ENCODE measurements at regions of chr5 and their contacts with region 1.

Region 1: DNA sequence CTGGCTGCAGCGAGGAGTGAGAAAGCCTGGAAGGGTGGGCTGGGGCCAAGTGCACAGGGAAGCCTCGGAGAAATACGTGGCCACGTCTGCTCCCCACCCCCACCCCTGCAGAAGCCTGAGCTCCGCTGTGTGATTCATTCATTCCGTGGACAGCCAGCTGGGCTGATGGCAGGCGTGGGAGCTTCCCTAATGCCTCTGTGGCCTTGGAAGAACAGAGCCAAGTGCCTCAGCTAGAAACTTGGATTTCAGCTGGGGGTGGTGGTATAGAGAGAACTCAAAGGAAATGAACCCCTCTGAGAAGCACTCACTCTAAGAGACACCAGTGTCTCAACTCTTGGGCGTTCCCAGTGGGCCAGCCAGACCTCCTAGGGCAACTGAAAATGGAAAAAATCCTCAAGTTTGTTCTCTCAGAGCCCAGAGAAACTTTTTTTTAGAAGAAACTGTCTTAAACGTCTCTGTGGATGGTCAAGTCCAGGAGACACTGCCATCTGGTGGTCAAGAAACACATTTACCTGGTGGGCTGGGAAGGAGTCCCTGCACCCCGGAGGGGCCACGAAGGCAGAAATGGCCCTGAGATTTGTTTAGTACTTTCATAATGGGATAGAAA is 18.0 kb downstream of the ATOX1 start:
- DNase-seq: peak; percentile 83
- H3K4me3 ChIP-seq: peak overlapping the region; percentile 8
- H3K27me3 ChIP-seq: no peaks in the 10 kb centered on the region
- CTCF ChIP-seq: peak; percentile 75

Region 2: DNA sequence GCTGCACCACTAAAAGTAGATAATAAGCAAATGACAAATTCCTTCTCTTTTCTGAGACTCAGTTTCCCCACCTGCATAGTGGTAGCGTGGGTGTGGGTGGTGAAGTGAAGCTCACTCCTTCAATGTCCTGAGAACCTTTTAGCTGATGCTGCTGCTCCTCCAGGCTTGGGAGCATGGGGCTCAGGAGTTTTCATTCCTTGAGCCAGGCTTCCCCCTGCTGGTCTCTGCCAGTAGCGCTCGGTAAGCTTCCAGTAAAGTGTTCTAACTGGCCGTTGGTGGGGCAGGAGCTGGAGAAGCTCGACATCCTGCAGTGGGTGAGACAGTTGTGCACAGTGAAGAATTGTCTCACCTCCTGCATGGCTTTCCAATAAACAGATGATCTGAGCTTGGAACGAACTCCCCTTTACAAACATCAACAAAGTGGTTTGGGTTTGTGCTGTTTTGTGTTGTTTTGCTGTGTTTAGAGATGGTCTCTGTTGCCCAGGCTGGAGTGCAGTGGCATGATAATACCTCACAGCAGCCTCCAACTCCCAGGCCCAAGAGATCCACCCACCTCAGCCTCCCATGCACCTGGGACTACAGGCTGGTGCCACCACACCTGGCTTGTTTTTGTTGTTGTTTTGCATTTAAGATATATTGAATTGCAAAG is 88.3 kb before region 1 on chr5:
- CTCF ChIA-PET with region 1: interaction called, 234 read pairs
- POLR2A ChIA-PET with region 1: no interaction called
- DNase-seq: no peak
- H3K4me3 ChIP-seq: no peak overlapping the region
- H3K27me3 ChIP-seq: no peaks in the 10 kb centered on the region
- CTCF ChIP-seq: peak; percentile 96

Region 3: DNA sequence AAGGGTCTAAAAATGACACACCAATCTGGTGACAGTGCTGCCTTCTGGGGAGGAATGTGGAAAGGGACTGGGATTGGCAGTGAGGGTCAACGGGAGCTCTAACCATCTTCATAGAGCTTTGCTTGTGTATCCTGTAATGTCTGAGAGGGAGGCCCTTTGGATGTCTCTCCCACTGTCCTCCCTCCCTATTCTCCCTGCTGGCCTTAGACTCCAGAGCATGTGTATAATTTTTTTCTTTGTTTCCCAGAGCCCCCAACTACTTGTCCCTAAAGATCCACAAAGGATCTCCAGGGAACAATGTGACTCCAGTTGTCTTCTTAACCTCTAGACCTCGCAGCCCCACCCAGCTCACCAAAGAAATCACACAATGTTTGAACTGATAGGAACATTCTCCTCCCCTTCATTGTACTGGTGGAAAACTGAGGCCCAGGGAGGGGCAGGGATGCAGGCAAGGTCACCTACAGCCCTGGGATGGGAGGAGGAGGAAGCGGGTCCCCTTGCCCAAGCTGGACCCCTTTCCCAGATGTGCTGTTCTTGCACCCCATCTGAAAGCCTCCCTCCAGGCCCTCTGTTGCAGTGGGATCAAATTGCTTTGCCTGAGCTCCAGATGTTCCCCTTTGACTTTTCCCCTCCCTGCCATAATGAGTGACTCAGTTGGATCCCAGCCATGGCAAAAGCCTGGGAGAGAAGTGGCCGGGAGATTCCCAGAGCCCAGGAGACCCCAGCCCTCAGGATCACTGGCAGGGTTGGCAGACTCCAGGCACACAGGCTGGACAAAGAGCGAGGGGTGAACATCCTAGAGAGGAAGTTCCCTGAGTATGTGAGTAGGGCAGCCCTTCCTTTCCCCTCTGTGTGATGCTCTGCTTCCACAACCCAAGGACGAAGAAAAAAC is 75.5 kb before region 1 on chr5:
- CTCF ChIA-PET with region 1: interaction called, 234 read pairs
- POLR2A ChIA-PET with region 1: interaction called, 14 read pairs
- DNase-seq: no peak
- H3K4me3 ChIP-seq: no peak overlapping the region
- H3K27me3 ChIP-seq: no peaks in the 10 kb centered on the region
- CTCF ChIP-seq: no peak

Region 4: DNA sequence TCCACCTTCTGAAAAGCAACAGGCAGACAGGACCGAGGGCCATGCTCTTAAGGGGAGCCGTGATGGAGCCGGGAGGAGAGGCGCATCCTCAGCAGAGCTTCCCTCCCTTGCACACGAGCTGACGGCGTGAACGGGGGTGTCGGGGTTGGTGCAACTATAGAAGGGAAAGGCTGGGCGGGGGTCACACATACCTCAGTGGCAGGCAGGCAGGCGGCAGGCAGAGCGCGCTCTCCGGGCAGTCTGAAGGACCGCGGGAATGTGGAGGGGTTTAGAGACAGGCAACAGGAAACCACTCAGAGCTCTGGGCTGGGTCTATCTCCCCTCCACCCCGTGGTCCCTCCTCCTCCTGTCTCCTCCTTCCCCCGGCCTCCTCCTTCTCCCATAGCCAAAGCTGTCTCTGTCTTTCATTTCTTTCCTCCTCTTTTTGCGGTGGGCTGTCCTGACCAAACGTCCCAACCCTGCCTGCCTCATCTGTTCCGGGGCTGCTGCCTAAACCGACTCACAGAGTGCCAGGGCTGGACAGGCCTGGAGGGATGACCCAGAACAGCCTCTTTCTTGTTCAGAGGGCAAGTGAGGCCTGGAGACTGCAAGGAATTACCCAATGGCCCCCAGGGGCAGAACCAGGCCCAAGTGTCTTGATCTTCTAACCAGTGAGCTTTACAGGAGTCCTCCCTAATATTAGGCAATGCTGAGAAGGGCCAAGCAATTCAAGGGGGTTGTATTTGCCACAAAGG is 53.6 kb before region 1 on chr5 and contains the start of gene SPARC:
- CTCF ChIA-PET with region 1: interaction called, 59 read pairs
- POLR2A ChIA-PET with region 1: interaction called, 53 read pairs
- DNase-seq: peak; percentile 88
- H3K4me3 ChIP-seq: peak within 1 kb of the TSS; percentile 83
- H3K27me3 ChIP-seq: no peaks in the 10 kb centered on the region
- CTCF ChIP-seq: peak; percentile 14; the same call in 1 of the 2 replicates
- polyA plus RNA-seq, gene SPARC: 14,419 and 17,277 TPM in 2 replicates

Region 5: GRCh38 chr5:151708126-151708525 is 32.3 kb before region 1 on chr5:
- CTCF ChIA-PET with region 1: interaction called, 16 read pairs
- POLR2A ChIA-PET with region 1: interaction called, 3 read pairs
- DNase-seq: no peak
- H3K4me3 ChIP-seq: no peak overlapping the region
- H3K27me3 ChIP-seq: no peaks in the 10 kb centered on the region
- CTCF ChIP-seq: no peak

Region 6: GRCh38 chr5:151751091-151751490 is 10.7 kb after region 1 on chr5:
- CTCF ChIA-PET with region 1: interaction called, 15 read pairs
- POLR2A ChIA-PET with region 1: interaction called, 8 read pairs
- DNase-seq: no peak
- H3K4me3 ChIP-seq: no peak overlapping the region
- H3K27me3 ChIP-seq: no peaks in the 10 kb centered on the region
- CTCF ChIP-seq: no peak